Heart right ventricle (tissue), 16 donors: ENCODE measurements at regions of chr10 and their contacts with region 1.

Region 1: GRCh38 chr10:49225218-49225876 is 37.2 kb upstream of the TMEM273 start:
- DNase-seq: peak in 1 of 2 donors; percentile 31
- ATAC-seq: peak; percentile 55 to 88 (median 74)
- H3K4me3 ChIP-seq: no peak overlapping the region
- H3K27ac ChIP-seq: peak overlapping the region in 5 of 10 donors; percentile 24 to 53 (median 38)
- H3K4me1 ChIP-seq: peaks cover 0 to 26% (median 10%) of the 10 kb centered on the region in 9 donors
- H3K27me3 ChIP-seq: no peaks in the 10 kb centered on the region
- CTCF ChIP-seq: no peak

Region 2: DNA sequence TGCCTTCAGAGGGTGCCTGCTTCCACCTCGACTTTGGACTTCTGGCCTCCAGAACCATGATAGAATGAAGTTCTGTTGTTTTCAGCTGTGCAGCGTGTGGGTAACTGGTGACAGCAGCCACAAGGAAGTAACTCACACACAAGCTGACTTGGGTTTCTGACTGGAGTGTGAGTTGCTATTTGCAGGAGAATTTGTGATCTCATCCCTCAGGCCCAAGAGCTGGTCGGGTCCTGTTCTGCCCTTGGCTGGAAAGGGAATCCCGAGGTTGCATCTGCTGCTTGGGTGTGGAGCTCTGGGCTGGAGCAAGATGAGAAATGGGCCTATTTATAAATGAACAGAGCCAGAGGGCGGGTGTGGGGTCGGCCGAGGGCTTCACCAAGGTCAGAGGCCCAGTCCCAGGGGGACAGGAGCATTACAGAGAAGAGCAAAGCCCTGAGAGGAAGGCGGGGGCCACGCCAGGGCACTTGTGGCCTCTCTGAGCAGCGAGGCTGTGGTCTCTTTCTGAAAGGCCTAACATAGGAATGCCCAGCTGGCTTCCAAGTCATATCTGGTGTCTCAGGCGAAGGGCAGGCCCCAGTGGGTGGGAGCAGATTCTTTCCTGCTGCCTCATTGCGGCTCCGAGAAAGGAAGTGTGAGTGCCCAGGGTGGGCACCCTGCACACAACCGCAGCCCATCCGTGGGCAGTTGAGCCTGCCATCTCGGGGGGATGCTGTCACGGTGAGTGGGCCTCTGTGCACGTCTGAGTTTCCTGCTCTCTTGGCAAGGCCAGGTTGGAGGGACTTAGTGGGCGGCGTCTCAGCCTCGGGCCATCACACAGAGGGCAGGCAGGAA is 47.1 kb after region 1 on chr10:
- intact Hi-C with region 1: loop called in 1 of 10 experiments (anchors 2 kb)
- DNase-seq: peak; percentile 78 to 81
- ATAC-seq: peak; percentile 76 to 91 (median 86)
- H3K4me3 ChIP-seq: no peak overlapping the region
- H3K27ac ChIP-seq: peak overlapping the region; percentile 60 to 92 (median 78)
- H3K4me1 ChIP-seq: peaks cover 14 to 48% (median 25%) of the 10 kb centered on the region in 9 donors
- H3K27me3 ChIP-seq: no peaks in the 10 kb centered on the region
- CTCF ChIP-seq: no peak